Activated T-helper 1 cell treated with anti-CD3 and anti-CD28 coated beads, Interleukin-12 subunit alpha, Interleukin-12 subunit beta, Interleukin-2, Interleukin-4 antibody, amounts not matched to agents 30 ng/mL and 10 ng/mL and 1 ng/mL, durations not matched to agents 14 hours and 24 hours and 36 hours (primary cell): ENCODE measurements at regions of chr7 and their contacts with region 1.

Region 1: GRCh38 chr7:114825423-114825951 is 96.4 kb upstream of the MDFIC start:
- DNase-seq: peak; percentile 6
- H3K4me3 Mint-ChIP-seq: peak overlapping the region; percentile 13
- H3K27ac Mint-ChIP-seq: peak overlapping the region; percentile 89
- H3K4me1 Mint-ChIP-seq: peaks cover 21% of the 10 kb centered on the region
- H3K27me3 Mint-ChIP-seq: no peaks in the 10 kb centered on the region

Region 2: GRCh38 chr7:114502454-114503254 is 322.8 kb before region 1 on chr7:
- intact Hi-C with region 1: no loop called
- DNase-seq: no peak
- H3K4me3 Mint-ChIP-seq: no peak overlapping the region
- H3K27ac Mint-ChIP-seq: no peak overlapping the region
- H3K4me1 Mint-ChIP-seq: no peaks in the 10 kb centered on the region
- H3K27me3 Mint-ChIP-seq: no peaks in the 10 kb centered on the region

Region 3: DNA sequence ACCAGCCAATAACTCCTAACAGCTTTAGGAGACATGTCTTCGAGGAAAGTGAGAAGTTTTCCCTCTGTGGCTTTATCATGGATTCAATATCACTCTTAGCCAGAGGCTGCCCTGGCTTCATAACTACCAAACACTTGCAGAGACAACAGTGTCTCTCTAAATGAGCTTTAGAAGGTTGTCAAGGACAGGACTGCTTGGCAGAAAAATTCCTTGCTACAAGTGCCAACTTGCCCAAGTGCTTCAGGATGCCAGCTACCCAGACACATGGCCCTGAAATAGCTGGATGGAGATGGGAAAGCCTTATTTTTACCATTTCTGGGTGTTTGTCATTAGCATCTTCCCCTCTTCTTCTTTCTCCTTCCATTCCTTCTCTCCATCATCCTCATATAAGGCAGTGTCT is 40.7 kb before region 1 on chr7:
- intact Hi-C with region 1: loop called (anchors 1 kb)
- DNase-seq: no peak
- H3K4me3 Mint-ChIP-seq: no peak overlapping the region
- H3K27ac Mint-ChIP-seq: no peak overlapping the region
- H3K4me1 Mint-ChIP-seq: peaks cover 24% of the 10 kb centered on the region
- H3K27me3 Mint-ChIP-seq: no peaks in the 10 kb centered on the region

Region 4: DNA sequence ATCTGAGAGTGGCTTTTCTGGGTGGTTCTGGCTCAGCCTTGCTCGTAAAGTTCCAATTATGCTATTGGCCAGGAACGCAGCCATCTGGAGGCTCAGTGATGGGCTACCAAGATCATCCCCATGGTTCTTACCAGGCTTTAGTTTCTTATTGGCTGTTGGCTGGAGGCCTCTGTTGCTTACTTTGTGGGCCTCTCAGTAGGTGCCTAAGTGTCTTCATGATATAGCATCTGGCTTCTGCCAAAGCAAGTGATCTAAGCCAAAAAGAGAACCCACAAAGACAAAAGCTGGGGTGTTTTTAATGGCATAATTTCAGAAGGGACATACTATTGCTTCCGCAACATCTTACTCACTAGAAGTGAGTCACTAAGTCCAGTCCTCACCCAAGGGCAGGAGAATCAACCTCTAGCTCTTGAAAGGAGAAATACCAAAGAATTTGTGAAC is 35.6 kb before region 1 on chr7:
- intact Hi-C with region 1: loop called (anchors 1 kb)
- DNase-seq: no peak
- H3K4me3 Mint-ChIP-seq: no peak overlapping the region
- H3K27ac Mint-ChIP-seq: peak overlapping the region; percentile 65
- H3K4me1 Mint-ChIP-seq: peaks cover 42% of the 10 kb centered on the region
- H3K27me3 Mint-ChIP-seq: no peaks in the 10 kb centered on the region

Region 5: GRCh38 chr7:114799628-114800028 is 25.9 kb before region 1 on chr7:
- intact Hi-C with region 1: loop called (anchors 1 kb)
- DNase-seq: no peak
- H3K4me3 Mint-ChIP-seq: no peak overlapping the region
- H3K27ac Mint-ChIP-seq: peak overlapping the region; percentile 94
- H3K4me1 Mint-ChIP-seq: peaks cover 48% of the 10 kb centered on the region
- H3K27me3 Mint-ChIP-seq: no peaks in the 10 kb centered on the region

Region 6: GRCh38 chr7:114922016-114922651 is 96.6 kb after region 1 on chr7 and contains the start of gene MDFIC:
- intact Hi-C with region 1: loop called (anchors 1 kb)
- DNase-seq: peak; percentile 56
- H3K4me3 Mint-ChIP-seq: peak within 1 kb of the TSS; percentile 96
- H3K27ac Mint-ChIP-seq: peak within 1 kb of the TSS; percentile 97
- H3K4me1 Mint-ChIP-seq: peaks cover 63% of the 10 kb centered on the region
- H3K27me3 Mint-ChIP-seq: no peaks in the 10 kb centered on the region
- total RNA-seq, gene MDFIC: 114 and 136 TPM in 2 replicates